Heart left ventricle (tissue), 16 donors: ENCODE measurements at regions of chr15 and their contacts with region 1.

Region 1: DNA sequence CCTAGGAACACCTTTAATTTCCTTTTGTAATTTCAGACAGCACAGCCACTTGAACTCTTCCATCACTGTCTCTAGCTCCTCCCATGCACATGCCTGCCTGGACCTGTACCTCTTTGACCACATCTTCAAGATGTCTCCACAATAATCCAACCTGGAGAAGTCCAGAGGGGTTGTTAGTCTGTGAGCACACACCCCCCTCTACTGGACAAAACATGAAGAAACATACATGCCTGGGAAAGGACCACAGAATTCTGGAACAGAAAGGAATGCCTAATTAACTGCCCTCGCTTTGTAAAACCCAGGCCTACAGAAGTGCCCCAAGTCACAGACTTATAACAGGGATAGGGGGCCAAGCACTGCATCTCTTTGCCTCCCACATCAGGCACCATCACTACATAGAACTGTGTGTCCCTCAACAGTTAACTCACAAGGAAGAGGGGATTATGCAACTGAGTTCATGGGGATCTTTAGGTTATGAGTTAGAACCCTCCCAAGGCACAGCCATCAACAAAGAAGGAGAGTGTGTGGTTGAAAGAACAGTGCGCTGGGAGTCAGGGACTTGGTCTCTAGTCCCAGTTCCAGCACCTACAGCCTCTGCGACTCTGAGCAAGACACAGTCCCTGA is 61.7 kb downstream of the FMN1 start:
- DNase-seq: no peak
- ATAC-seq: peak; percentile 53 to 80 (median 60)
- H3K4me3 ChIP-seq: no peak overlapping the region
- H3K27ac ChIP-seq: peak overlapping the region in 1 of 12 donors; percentile 38
- H3K4me1 ChIP-seq: peaks cover 0 to 51% (median 14%) of the 10 kb centered on the region in 12 donors
- H3K27me3 ChIP-seq: no peaks in the 10 kb centered on the region
- CTCF ChIP-seq: peak; percentile 44 to 70 (median 61)
- POLR2A ChIP-seq: no peak

Region 2: DNA sequence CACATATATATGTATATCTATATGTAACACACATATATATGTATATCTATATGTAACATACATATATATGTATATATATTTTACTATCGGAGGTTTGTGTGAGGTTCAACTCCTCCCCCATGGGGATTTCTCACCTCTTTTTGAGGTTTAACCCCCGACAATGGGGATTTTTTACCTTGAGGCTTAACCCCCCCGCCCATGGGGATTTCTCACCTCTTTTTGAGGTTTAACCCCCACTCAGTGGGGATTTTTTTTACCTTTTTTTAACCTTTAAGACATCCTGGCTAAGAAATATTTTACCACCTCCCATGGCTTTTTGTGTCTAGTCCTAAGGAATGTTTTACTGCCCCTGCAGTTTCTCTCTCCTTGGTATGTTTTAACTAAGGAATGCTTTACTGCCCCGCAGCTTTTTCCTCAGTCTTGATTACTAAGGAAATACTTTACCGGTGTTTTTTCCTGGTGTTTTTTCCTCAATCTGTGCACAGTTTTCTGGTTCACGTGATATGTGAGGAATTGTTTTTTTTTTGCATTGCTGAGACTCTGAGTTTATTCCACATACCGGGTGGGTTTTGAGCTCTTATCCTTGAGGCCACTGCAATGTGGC is 1621.0 kb before region 1 on chr15:
- intact Hi-C with region 1: no loop called
- DNase-seq: no peak
- ATAC-seq: no peak
- H3K4me3 ChIP-seq: no peak overlapping the region
- H3K27ac ChIP-seq: no peak overlapping the region
- H3K4me1 ChIP-seq: no peaks in the 10 kb centered on the region
- H3K27me3 ChIP-seq: no peaks in the 10 kb centered on the region
- CTCF ChIP-seq: no peak
- POLR2A ChIP-seq: no peak

Region 3: GRCh38 chr15:32657198-32657883 is 475.5 kb before region 1 on chr15:
- intact Hi-C with region 1: loop called in 4 of 10 experiments (anchors 2 to 10 kb)
- DNase-seq: no peak
- ATAC-seq: no peak
- H3K4me3 ChIP-seq: no peak overlapping the region
- H3K27ac ChIP-seq: no peak overlapping the region
- H3K4me1 ChIP-seq: peaks cover 0 to 3% (median 0%) of the 10 kb centered on the region in 12 donors
- H3K27me3 ChIP-seq: no peaks in the 10 kb centered on the region
- CTCF ChIP-seq: no peak
- POLR2A ChIP-seq: no peak

Region 4: DNA sequence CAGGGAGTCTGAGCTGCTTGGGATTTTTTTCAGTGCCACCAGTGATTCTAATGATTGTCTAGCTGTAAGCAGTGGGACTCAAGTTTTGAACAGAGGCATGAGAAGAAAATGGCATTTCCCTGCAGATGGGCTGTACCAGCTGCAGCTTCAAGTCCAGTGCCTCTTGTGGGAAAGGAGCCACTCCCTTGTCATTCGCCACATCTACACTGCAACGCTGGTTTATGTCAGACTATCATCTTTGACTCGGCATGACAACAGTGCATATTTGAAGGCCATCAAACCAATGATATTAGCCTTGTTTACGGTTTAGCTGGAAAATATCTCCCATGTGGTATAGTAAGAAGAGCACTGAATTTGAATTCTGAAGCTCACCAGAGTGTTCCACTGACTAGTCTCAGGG is 469.2 kb before region 1 on chr15:
- intact Hi-C with region 1: loop called in 4 of 10 experiments (anchors 2 to 10 kb)
- DNase-seq: no peak
- ATAC-seq: no peak
- H3K4me3 ChIP-seq: no peak overlapping the region
- H3K27ac ChIP-seq: no peak overlapping the region
- H3K4me1 ChIP-seq: peaks cover 0 to 3% (median 0%) of the 10 kb centered on the region in 12 donors
- H3K27me3 ChIP-seq: no peaks in the 10 kb centered on the region
- CTCF ChIP-seq: no peak
- POLR2A ChIP-seq: no peak

Region 5: GRCh38 chr15:33021806-33022389 is 110.9 kb before region 1 on chr15:
- intact Hi-C with region 1: loop called in 9 of 10 experiments (anchors 1 to 10 kb)
- DNase-seq: no peak
- ATAC-seq: peak; percentile 50 to 84 (median 69)
- H3K4me3 ChIP-seq: no peak overlapping the region
- H3K27ac ChIP-seq: peak overlapping the region in 11 of 12 donors; percentile 50 to 80 (median 63)
- H3K4me1 ChIP-seq: peaks cover 0 to 30% (median 9%) of the 10 kb centered on the region in 12 donors
- H3K27me3 ChIP-seq: no peaks in the 10 kb centered on the region
- CTCF ChIP-seq: peak; percentile 38 to 70 (median 56)
- POLR2A ChIP-seq: no peak

Region 6: GRCh38 chr15:33086507-33087121 is 46.2 kb before region 1 on chr15:
- intact Hi-C with region 1: loop called (anchors 1 to 5 kb)
- DNase-seq: no peak
- ATAC-seq: peak in 2 of 4 donors; percentile 63 to 75
- H3K4me3 ChIP-seq: no peak overlapping the region
- H3K27ac ChIP-seq: no peak overlapping the region
- H3K4me1 ChIP-seq: peaks cover 0 to 15% (median 0%) of the 10 kb centered on the region in 12 donors
- H3K27me3 ChIP-seq: no peaks in the 10 kb centered on the region
- CTCF ChIP-seq: peak; percentile 32 to 70 (median 52)
- POLR2A ChIP-seq: no peak